ENCODE measurements at regions of chr1 and their contacts with region 1.

Region 1: DNA sequence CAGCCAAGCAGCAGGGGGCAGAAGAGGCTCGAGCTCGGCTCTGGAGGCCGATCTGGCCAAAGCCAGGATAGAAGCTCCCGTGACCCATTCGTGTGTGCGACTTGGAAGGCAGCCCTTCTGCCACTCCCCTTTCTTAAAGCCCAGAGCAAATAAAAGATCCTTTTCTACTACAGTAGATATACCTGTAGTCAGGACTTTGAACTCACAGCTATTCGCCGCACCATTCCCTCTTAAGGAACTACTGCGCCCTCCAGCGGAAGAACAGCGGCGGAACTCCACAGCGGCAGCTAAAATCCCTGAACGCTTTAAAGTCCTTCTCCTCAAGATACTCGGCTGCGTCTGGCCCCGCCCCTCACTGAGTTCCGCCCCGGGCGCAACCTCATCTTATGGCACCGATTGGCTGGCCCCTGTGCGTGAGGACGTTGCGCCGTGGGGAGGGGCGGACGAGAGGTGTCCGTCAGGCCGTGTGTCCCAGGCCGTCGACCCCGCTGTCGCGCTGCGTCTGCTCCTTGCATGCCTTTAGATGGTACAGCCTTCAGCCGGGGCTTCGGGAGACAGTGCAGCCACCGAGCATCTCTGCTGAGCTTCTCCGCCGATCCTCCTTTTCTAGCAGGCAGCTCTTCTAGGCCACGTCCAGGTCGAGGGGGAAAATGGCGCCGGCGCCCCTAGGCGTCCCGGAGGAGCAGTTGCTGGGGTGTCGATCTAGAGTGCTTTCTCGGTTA is at the start of gene LRIG2:
- DNase-seq: peak; percentile 92
- H3K4me3 ChIP-seq: peak within 1 kb of the TSS; percentile 99
- H3K27ac ChIP-seq: peak within 1 kb of the TSS; percentile 86
- H3K27me3 ChIP-seq: no peaks in the 10 kb centered on the region
- CTCF ChIP-seq: peak; percentile 88
- polyA plus RNA-seq, gene LRIG2: 7.9 and 9.7 TPM in 2 replicates

Region 2: DNA sequence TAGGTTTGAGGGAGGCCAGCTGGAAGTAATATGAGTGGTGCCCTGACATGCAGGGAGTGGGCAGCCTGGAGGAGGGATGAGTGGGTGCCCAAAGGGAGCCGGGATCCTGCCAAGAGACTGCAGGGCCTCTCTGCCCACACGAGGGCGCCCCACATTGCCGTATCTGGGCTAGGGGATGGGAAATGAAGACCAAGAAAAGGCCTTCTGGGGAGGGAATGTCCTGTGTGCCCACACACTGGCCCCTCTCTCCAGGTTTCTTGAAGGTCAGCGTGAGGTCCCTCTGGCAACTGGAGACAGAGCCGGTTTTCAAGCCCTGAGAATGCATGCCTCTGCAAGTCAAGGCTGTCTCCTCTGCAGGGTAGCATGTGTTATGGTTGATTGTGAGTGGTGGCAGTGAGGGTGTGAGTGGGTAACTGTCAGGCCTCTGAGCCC is 263.6 kb before region 1 on chr1:
- CTCF ChIA-PET with region 1: interaction called, 23 read pairs
- POLR2A ChIA-PET with region 1: no interaction called
- DNase-seq: peak; percentile 18
- H3K4me3 ChIP-seq: no peak overlapping the region
- H3K27ac ChIP-seq: no peak overlapping the region
- H3K27me3 ChIP-seq: peaks cover 12% of the 10 kb centered on the region
- CTCF ChIP-seq: peak; percentile 94

Region 3: GRCh38 chr1:112882271-112882744 is 190.6 kb before region 1 on chr1:
- CTCF ChIA-PET with region 1: interaction called, 52 read pairs
- POLR2A ChIA-PET with region 1: no interaction called
- DNase-seq: no peak
- H3K4me3 ChIP-seq: no peak overlapping the region
- H3K27ac ChIP-seq: no peak overlapping the region
- H3K27me3 ChIP-seq: no peaks in the 10 kb centered on the region
- CTCF ChIP-seq: no peak

Region 4: DNA sequence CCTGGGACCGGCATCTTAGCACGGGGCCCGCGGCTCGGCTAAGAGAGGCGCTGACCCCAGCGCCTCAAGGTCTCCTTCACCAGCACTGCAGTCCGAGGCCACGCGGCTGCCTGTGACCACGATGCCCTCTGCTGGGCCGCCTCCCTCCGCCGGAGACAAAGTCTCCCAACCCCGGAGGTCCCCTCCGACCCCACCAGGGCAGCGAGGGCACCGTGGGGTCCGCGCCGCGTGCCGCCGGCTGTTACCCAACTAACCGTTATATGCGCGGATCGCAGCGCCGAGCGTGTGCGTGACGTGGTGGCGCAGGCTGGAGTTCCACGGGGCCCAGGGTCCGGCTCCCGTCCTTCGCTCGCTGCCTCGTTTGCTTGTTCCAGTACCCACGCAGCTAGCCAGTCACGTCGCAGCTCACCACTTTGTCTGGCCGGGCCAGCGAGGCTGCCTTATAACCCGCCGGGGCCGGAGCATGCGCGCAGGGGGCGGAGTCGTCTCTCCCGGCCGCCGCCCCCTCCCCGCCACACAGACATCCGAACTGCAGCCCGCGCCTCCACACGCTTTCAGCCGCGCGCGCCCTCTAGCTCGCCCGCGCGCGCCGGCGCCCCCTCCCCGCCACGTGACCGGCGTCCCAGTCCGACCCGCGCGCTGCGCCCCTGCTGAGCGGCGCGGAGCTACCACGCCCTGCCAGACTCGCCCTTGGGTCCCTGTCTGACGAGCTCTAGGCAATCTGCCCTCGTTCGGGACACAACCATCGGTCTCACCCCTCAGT is 117.0 kb before region 1 on chr1 and contains the start of gene SLC16A1:
- CTCF ChIA-PET with region 1: interaction called, 20 read pairs
- POLR2A ChIA-PET with region 1: interaction called, 4 read pairs
- DNase-seq: peak; percentile 87
- H3K4me3 ChIP-seq: peak within 1 kb of the TSS; percentile 95
- H3K27ac ChIP-seq: peak within 1 kb of the TSS; percentile 91
- H3K27me3 ChIP-seq: no peaks in the 10 kb centered on the region
- CTCF ChIP-seq: peak; percentile 40
- polyA plus RNA-seq, gene SLC16A1: 62.1 and 78.7 TPM in 2 replicates

Region 5: GRCh38 chr1:113057006-113057405 is 15.9 kb before region 1 on chr1:
- CTCF ChIA-PET with region 1: interaction called, 129 read pairs
- POLR2A ChIA-PET with region 1: no interaction called
- DNase-seq: no peak
- H3K4me3 ChIP-seq: no peak overlapping the region
- H3K27ac ChIP-seq: no peak overlapping the region
- H3K27me3 ChIP-seq: no peaks in the 10 kb centered on the region
- CTCF ChIP-seq: no peak

Region 6: GRCh38 chr1:113095790-113096455 is 23.0 kb after region 1 on chr1:
- CTCF ChIA-PET with region 1: interaction called, 65 read pairs
- POLR2A ChIA-PET with region 1: no interaction called
- DNase-seq: no peak
- H3K4me3 ChIP-seq: no peak overlapping the region
- H3K27ac ChIP-seq: no peak overlapping the region
- H3K27me3 ChIP-seq: no peaks in the 10 kb centered on the region
- CTCF ChIP-seq: no peak